Activated CD4-positive, alpha-beta memory T cell treated with anti-CD3 and anti-CD28 coated beads for 36 hours (primary cell): ENCODE measurements at regions of chr18 and their contacts with region 1.

Region 1: DNA sequence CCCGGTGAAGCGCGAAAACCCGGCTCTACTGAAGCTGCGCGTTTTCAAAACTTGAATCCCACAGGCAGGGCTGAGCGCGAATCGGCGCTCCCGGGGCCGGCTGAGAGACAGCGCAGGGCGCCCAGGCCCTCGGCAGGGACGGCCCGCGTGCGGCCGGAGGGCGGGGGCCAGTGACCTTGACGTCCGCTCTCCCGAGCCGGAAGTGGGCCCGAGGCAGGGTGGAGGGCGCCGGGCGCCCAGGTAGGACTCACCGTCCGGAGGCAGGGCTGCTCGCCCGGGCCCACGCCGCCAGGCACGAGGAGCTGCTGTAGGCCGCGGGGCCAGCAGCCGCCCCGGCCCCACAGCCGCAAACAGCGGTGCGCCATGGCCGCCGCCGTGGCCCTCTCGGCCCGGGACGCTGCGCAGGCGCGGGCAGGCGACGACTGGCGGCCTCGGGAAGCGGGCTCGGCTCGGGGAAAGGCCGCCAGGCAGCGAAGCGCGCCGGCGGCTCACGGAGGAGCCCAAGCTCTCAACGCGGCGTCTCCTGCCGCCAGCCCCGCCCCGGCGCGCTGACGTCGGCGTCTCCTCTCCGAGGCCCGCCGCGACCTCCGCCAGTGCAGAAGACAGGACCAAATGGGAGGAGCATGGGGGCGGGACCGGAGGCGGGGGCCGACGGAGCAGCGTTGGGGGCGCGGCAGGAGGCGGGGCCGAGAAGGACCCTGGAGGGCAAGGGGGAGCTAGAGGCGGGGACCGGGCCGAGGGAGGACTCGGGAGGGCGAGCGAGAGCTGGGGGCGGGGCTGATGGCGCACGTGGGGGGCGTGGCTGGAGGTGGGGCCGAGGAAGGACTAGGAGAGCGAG is at the start of gene AFG3L2:
- DNase-seq: peak; percentile 100
- H3K4me3 Mint-ChIP-seq: peak within 1 kb of the TSS; percentile 89
- H3K27ac Mint-ChIP-seq: peak within 1 kb of the TSS; percentile 87
- H3K4me1 Mint-ChIP-seq: peaks cover 44% of the 10 kb centered on the region
- H3K27me3 Mint-ChIP-seq: no peaks in the 10 kb centered on the region
- total RNA-seq, gene AFG3L2: 45.2 to 48.8 TPM

Region 2: DNA sequence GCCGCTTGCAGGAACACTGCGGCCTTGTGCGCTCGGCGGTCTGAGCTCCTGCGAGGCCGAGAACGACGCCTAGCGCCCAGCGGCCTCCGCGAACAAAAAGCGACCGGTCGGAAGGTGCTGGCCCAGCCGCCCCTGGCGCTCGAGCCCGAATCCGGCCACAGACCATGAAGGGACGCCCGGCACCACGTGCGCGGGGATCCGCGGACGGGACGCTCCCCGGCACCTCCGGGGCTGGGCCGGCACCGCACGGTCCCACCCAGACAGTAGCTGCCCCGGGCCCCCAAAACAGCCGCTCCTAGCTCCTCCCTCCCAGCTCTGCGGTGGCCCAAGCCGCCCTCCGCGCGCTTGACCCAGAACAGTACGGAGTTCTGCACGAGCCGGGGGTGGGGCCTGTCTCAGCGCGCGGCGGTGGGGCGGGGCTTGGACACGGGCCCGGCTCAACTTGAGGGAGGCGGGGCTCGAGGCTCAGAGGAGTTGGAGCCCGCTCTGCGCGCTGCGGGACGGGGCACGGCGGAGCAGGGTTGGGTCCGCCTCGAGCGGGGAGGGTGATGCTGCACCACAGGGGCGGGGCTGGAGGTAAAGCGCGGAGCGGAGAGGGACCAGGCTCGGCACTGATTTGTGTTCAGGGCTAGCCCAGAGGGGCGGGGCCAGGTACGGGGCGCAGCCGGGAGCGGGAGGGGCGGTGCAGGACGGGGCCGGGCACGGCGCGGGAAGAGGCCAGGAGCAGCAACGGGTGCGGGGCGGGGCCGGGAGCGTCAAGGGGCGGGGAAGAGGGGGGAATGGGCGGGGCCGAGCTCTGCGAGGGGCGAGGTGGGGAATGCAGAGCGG is 396.2 kb before region 1 on chr18:
- CTCF ChIA-PET with region 1: no interaction called
- POLR2A ChIA-PET with region 1: interaction called, 5 read pairs
- intact Hi-C with region 1: loop called (anchors 2 kb)
- DNase-seq: peak; percentile 99
- H3K4me3 Mint-ChIP-seq: peak overlapping the region; percentile 76
- H3K27ac Mint-ChIP-seq: peak overlapping the region; percentile 62
- H3K4me1 Mint-ChIP-seq: peaks cover 16% of the 10 kb centered on the region
- H3K27me3 Mint-ChIP-seq: peaks cover 7% of the 10 kb centered on the region

Region 3: GRCh38 chr18:12574494-12575185 is 197.7 kb after region 1 on chr18:
- CTCF ChIA-PET with region 1: no interaction called
- POLR2A ChIA-PET with region 1: no interaction called
- intact Hi-C with region 1: no loop called
- DNase-seq: no peak
- H3K4me3 Mint-ChIP-seq: no peak overlapping the region
- H3K27ac Mint-ChIP-seq: no peak overlapping the region
- H3K4me1 Mint-ChIP-seq: no peaks in the 10 kb centered on the region
- H3K27me3 Mint-ChIP-seq: peaks cover 4% of the 10 kb centered on the region

Region 4: GRCh38 chr18:12657684-12658425 is 280.9 kb after region 1 on chr18 and contains the start of gene SPIRE1:
- CTCF ChIA-PET with region 1: interaction called, 4 read pairs
- POLR2A ChIA-PET with region 1: interaction called, 3 read pairs
- intact Hi-C with region 1: loop called (anchors 5 kb)
- DNase-seq: peak; percentile 44
- H3K4me3 Mint-ChIP-seq: peak within 1 kb of the TSS; percentile 75
- H3K27ac Mint-ChIP-seq: no peak within 1 kb of the TSS
- H3K4me1 Mint-ChIP-seq: peaks cover 18% of the 10 kb centered on the region
- H3K27me3 Mint-ChIP-seq: peaks cover 8% of the 10 kb centered on the region
- total RNA-seq, gene SPIRE1: 5.1 to 7.2 TPM

Region 5: DNA sequence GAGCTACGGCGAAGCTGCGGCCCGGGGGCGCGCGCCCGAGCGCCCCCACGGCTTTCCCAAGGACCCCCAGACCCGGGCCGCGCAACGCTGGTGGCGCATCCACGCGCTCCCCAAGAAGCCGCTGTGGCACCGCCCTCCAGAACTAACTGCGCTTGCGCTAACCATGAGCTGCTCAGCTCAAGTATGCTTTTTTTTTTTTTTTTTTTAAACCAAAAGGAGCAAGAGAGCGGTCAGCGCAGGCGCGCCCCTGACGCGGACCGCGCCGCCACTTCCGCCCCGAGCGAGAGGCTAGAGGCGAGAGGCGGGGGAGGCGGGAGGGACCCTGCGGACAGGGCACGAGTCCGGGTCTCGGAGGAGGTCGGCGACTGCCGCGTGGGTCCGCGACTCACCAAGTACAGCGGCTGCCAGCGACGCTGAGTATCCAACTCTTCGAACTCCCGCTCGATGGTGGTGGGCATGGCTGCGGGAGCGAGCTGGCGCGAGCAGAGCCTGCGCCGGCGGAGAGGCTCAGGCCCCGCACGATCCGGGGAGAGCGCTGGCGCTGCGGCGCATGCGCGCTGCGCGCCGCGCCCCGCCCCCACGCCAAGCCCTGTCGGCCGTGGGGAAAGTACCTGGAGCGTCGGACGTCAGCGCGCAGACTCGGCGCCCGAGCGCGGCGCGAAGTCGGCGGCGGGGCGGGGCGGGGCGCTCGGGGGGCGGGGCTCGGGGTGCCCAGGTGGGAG is 506.9 kb after region 1 on chr18 and contains the start of gene PTPN2:
- CTCF ChIA-PET with region 1: no interaction called
- POLR2A ChIA-PET with region 1: interaction called, 14 read pairs
- intact Hi-C with region 1: loop called (anchors 1 kb)
- DNase-seq: peak; percentile 94
- H3K4me3 Mint-ChIP-seq: peak within 1 kb of the TSS; percentile 78
- H3K27ac Mint-ChIP-seq: peak within 1 kb of the TSS; percentile 92
- H3K4me1 Mint-ChIP-seq: peaks cover 56% of the 10 kb centered on the region
- H3K27me3 Mint-ChIP-seq: no peaks in the 10 kb centered on the region
- total RNA-seq, gene PTPN2: 68.8 to 73.3 TPM

Region 6: GRCh38 chr18:13137670-13138419 is 760.9 kb after region 1 on chr18:
- CTCF ChIA-PET with region 1: no interaction called
- POLR2A ChIA-PET with region 1: no interaction called
- intact Hi-C with region 1: loop called (anchors 10 kb)
- DNase-seq: peak; percentile 81
- H3K4me3 Mint-ChIP-seq: peak overlapping the region; percentile 88
- H3K27ac Mint-ChIP-seq: peak overlapping the region; percentile 69
- H3K4me1 Mint-ChIP-seq: peaks cover 26% of the 10 kb centered on the region
- H3K27me3 Mint-ChIP-seq: no peaks in the 10 kb centered on the region